HAP-1 (cell line): ENCODE measurements at regions of chr6 and their contacts with region 1.

Region 1: GRCh38 chr6:75526502-75527127 is 33.0 kb upstream of the FILIP1 start:
- DNase-seq: peak; percentile 74 to 79
- H3K4me3 ChIP-seq: no peak overlapping the region
- H3K4me1 ChIP-seq: peaks cover 12% of the 10 kb centered on the region
- H3K27me3 ChIP-seq: no peaks in the 10 kb centered on the region

Region 2: GRCh38 chr6:75296811-75297779 is 229.5 kb before region 1 on chr6:
- in situ Hi-C with region 1: loop called (anchors 10 kb)
- DNase-seq: peak in 1 of 2 experiments; percentile 72
- H3K4me3 ChIP-seq: no peak overlapping the region
- H3K4me1 ChIP-seq: peaks cover 7% of the 10 kb centered on the region
- H3K27me3 ChIP-seq: no peaks in the 10 kb centered on the region

Region 3: DNA sequence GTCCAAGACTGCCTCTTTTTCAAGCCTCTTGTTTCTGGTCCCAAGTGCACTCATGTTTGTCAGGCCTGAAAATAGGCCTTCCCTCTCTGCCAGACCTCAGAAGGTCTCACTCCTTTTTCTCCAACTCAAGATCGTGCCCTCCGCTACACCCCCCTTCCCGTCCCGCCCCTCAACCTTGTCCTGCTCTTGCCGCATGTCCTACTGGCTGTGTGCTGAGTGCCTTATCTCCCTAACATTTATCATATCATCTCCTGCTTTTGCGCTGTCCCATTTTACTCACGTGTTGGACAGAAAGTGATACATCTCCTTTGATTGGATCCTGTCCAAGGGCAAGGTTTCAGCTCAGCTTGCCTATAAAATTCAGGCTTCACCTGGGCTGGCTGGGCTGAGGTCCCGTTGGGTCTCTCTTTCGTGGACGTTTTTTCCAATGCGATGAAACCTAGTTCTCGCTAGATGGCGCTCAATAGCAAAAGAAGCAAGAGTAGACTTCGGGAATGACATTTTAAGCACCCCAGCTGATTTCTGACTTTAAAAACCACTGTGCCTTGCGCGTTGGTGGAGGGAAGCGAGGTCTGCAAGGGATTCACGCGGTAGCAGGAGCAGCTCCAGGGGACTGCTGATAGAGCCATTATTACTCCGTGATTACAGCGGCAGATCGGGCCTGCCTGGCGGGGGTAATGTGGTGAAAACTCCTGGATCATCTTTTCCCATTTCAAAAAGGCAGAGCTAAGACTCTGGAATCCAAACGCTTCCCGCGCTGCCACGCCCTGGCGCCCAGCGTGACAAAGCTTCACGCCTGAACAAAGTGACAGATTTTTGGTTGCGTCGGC is 408.2 kb after region 1 on chr6:
- in situ Hi-C with region 1: no loop called
- DNase-seq: peak; percentile 64 to 82
- H3K4me3 ChIP-seq: peak overlapping the region; percentile 18
- H3K4me1 ChIP-seq: peaks cover 12% of the 10 kb centered on the region
- H3K27me3 ChIP-seq: 0 out of 2 replicates have a peak, but pooled peaks cover 2% of the 10 kb centered on the region